Cardiac septum (tissue), 1 donor: ENCODE measurements at regions of chr14 and their contacts with region 1.

Region 1: DNA sequence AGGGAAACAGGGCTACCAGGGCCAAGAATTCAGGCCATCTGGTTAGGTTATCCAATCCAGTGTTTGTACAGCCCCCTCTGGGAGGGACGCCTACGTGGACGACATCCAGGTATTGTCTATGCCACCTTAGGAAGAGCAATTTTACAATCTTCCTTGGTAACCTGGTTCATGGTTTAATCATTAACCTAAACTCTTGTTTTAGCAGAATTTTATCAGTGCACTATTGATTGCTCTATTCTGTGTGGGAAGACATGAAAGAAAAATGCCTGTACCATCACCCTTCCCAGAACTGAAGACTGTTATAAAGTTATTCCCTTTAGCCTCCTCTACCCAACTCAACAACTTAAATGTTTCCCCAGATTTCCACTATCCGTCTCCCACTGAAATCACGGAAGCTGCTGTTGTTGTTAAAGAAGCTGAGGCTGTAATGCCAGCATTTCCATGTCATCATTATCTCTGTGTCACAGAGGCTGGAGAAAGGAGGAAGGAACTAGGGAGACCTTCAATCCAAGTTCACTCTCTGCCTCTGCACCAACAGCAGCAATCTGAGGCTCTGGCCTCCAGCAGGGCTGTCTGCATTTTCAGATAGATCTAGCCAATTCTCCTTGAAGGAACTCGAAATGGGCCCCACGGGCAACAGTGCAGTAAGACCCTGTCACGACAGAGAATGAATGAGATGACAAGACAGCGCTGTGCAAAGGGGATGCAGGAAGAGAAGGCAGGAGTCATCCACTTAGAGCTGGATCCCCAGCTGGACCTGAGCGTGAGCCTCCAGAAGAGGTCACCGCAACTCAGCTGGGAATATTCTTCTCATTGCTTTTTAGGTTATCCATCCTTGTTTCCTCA is 183.4 kb upstream of the GZMB start:
- DNase-seq: no peak

Region 2: DNA sequence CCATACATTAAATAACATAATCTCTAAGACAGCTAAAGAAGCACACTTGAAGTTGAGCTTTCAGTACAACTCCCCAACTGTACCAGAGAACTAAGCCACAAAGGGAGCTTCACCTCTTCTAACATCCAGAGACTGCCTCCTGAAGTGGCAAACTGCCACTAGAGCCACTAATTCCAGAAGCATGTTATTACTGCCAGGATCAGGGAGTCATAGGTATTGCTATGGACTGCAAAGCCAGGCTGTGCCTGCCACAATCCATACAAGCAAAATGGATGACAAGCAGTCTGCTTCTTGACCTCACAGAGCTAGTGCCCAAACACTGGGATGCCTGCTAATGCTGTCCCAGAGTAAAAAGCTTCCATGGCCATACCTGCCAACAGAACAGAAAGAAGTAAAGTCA is 72.4 kb after region 1 on chr14:
- intact Hi-C with region 1: loop called (anchors 5 kb)
- DNase-seq: no peak

Region 3: DNA sequence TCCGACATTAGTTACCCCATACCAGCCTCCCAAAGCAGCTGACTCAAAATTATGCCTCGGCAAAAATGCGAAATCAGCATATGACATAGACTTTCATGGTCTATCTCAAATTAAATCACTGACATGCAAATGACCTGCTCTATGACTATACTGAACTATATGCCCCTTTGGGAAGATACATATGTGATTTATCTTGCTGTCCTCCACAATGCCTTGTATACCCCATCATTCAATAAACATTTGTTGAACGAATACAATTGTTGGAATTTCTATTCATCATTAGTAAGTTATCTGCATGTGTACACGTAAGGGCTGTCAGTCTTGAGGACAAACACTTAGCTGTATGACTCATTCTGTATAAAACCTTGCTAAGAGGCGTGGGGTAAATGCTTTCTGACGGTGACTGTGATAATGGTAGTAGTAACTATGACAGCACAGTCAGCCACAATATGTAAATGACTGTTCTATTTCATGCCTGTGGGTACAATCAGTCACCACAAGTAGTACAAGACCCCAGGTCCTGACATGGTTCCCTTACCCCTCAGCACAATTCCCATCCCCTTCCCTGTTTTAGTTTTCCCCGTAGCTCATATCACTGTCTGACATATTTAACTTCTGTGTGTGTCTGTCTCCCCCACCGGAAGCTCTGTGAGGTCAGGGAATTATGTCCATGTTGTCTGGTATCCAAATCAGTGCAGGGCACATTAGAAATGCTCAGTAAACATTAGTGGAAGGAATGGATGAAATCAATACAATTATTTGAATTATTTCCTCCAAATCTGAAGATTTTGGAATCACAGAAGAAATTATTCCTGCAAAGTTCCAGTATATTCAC is 189.7 kb after region 1 on chr14:
- intact Hi-C with region 1: no loop called
- DNase-seq: no peak

Region 4: GRCh38 chr14:25056688-25057078 is 239.2 kb after region 1 on chr14:
- intact Hi-C with region 1: no loop called
- DNase-seq: no peak

Region 5: DNA sequence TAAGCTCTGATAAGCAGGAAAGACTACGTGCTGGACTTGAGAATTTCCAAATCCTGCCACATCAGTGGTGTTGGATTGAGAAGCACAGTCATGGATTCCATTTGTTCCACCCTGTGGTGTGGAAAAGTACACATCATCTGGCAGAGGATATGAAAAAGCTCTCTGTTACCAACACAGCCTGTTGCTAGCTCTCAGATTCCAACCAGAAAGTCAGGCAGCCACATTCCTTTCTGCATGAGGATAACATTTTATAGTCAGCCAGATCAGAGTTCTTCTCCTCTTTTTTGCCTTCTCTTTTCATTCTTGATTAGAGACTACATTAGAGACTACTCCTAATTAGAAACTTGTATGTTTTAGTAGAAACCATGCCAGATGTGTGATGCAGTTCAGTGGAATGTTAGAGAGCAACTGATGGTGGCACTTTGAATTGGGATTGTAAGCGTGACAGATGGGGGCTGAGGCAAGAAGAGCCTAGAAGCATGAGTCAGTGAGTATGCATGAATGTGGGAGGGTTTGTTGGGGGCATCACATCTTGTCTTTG is 293.7 kb after region 1 on chr14:
- intact Hi-C with region 1: loop called (anchors 5 kb)
- DNase-seq: no peak